Activated CD4-positive, alpha-beta T cell treated with anti-CD3 and anti-CD28 coated beads for 36 hours (primary cell): ENCODE measurements at regions of chr17 and their contacts with region 1.

Region 1: GRCh38 chr17:67376737-67377487 is at the start of gene PITPNC1:
- DNase-seq: peak; percentile 94
- ATAC-seq: peak; percentile 74
- H3K4me3 Mint-ChIP-seq: peak within 1 kb of the TSS; percentile 83
- H3K27ac Mint-ChIP-seq: peak within 1 kb of the TSS; percentile 82
- H3K4me1 Mint-ChIP-seq: peaks cover 38% of the 10 kb centered on the region
- H3K27me3 Mint-ChIP-seq: no peaks in the 10 kb centered on the region
- total RNA-seq, gene PITPNC1: 41.6 to 56.3 TPM

Region 2: GRCh38 chr17:67116045-67116719 is 260.7 kb before region 1 on chr17:
- CTCF ChIA-PET with region 1: no interaction called
- POLR2A ChIA-PET with region 1: no interaction called
- intact Hi-C with region 1: no loop called
- DNase-seq: no peak
- ATAC-seq: no peak
- H3K4me3 Mint-ChIP-seq: no peak overlapping the region
- H3K27ac Mint-ChIP-seq: no peak overlapping the region
- H3K4me1 Mint-ChIP-seq: peaks cover 9% of the 10 kb centered on the region
- H3K27me3 Mint-ChIP-seq: no peaks in the 10 kb centered on the region

Region 3: GRCh38 chr17:67359960-67360773 is 16.7 kb before region 1 on chr17:
- CTCF ChIA-PET with region 1: interaction called, 35 read pairs
- POLR2A ChIA-PET with region 1: interaction called, 7 read pairs
- intact Hi-C with region 1: loop called in 1 of 2 experiments (anchors 1 kb)
- DNase-seq: peak; percentile 76
- ATAC-seq: peak; percentile 85
- H3K4me3 Mint-ChIP-seq: peak overlapping the region; percentile 47
- H3K27ac Mint-ChIP-seq: peak overlapping the region; percentile 87
- H3K4me1 Mint-ChIP-seq: peaks cover 73% of the 10 kb centered on the region
- H3K27me3 Mint-ChIP-seq: no peaks in the 10 kb centered on the region

Region 4: GRCh38 chr17:67421869-67422273 is 45.0 kb after region 1 on chr17:
- CTCF ChIA-PET with region 1: interaction called, 16 read pairs
- POLR2A ChIA-PET with region 1: no interaction called
- intact Hi-C with region 1: no loop called
- DNase-seq: peak; percentile 70
- ATAC-seq: peak; percentile 96
- H3K4me3 Mint-ChIP-seq: peak overlapping the region; percentile 20
- H3K27ac Mint-ChIP-seq: peak overlapping the region; percentile 88
- H3K4me1 Mint-ChIP-seq: peaks cover 75% of the 10 kb centered on the region
- H3K27me3 Mint-ChIP-seq: no peaks in the 10 kb centered on the region

Region 5: DNA sequence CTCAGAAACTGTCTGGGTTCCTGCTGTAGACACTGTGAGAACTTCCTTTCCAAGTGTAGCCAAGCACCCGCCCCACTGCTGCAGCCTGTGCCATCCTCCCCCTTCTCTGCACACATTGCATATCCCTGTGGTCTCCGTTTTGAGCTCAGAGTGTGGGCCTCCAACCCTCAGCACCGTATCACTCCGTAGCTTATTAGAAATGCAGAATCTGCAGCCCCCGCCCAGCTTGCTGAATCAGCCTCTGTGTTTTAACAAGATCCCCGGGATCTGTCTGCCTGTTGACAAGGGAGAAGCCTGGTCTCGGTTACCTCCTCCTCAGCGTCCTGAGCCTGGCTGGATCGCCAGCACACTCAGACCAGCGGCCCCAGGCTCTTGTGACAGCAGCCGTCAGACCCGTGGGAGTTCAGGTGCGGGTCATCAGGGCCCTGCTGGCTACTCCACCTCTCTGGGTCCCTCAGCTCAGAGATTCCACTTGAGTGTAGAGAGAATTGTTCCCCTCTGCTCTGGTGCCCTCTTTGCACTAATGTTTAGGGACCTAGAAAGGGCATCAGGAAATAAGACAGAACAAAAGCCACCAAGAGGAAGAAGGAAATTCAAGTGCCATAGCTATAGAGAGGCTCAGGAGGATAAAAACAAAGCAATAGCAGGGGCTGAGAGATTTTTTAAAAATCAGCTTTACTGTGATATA is 92.4 kb after region 1 on chr17:
- CTCF ChIA-PET with region 1: interaction called, 171 read pairs
- POLR2A ChIA-PET with region 1: interaction called, 5 read pairs
- intact Hi-C with region 1: no loop called
- DNase-seq: no peak
- ATAC-seq: peak; percentile 42
- H3K4me3 Mint-ChIP-seq: no peak overlapping the region
- H3K27ac Mint-ChIP-seq: peak overlapping the region; percentile 56
- H3K4me1 Mint-ChIP-seq: peaks cover 65% of the 10 kb centered on the region
- H3K27me3 Mint-ChIP-seq: no peaks in the 10 kb centered on the region

Region 6: GRCh38 chr17:67602956-67603355 is 226.0 kb after region 1 on chr17:
- CTCF ChIA-PET with region 1: interaction called, 85 read pairs
- POLR2A ChIA-PET with region 1: no interaction called
- intact Hi-C with region 1: loop called (anchors 1 to 2 kb)
- DNase-seq: peak; percentile 69
- ATAC-seq: peak; percentile 93
- H3K4me3 Mint-ChIP-seq: no peak overlapping the region
- H3K27ac Mint-ChIP-seq: no peak overlapping the region
- H3K4me1 Mint-ChIP-seq: peaks cover 20% of the 10 kb centered on the region
- H3K27me3 Mint-ChIP-seq: no peaks in the 10 kb centered on the region

Region 7: GRCh38 chr17:67717624-67718329 is 340.9 kb after region 1 on chr17 and contains the start of gene NOL11:
- CTCF ChIA-PET with region 1: interaction called, 6 read pairs
- POLR2A ChIA-PET with region 1: interaction called, 5 read pairs
- intact Hi-C with region 1: loop called in 1 of 2 experiments (anchors 1 kb)
- DNase-seq: peak; percentile 100
- ATAC-seq: peak; percentile 96
- H3K4me3 Mint-ChIP-seq: peak within 1 kb of the TSS; percentile 88
- H3K27ac Mint-ChIP-seq: peak within 1 kb of the TSS; percentile 98
- H3K4me1 Mint-ChIP-seq: peaks cover 19% of the 10 kb centered on the region
- H3K27me3 Mint-ChIP-seq: no peaks in the 10 kb centered on the region
- total RNA-seq, gene NOL11: 79.3 to 79.7 TPM

Region 8: DNA sequence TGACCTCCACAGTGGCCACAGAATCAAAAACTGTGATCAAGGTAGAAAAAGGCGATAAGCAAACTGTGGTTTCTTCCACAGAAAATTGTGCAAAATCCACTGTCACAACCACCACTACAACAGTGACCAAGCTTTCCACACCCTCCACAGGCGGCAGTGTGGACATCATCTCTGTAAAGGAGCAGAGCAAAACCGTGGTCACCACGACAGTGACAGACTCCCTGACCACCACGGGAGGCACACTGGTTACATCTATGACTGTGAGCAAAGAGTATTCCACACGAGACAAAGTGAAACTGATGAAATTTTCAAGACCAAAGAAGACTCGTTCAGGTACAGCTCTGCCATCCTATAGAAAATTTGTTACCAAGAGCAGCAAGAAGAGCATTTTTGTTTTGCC is 535.7 kb after region 1 on chr17:
- CTCF ChIA-PET with region 1: no interaction called
- POLR2A ChIA-PET with region 1: no interaction called
- intact Hi-C with region 1: loop called in 1 of 2 experiments (anchors 5 kb)
- DNase-seq: peak; percentile 33
- ATAC-seq: peak; percentile 21
- H3K4me3 Mint-ChIP-seq: no peak overlapping the region
- H3K27ac Mint-ChIP-seq: no peak overlapping the region
- H3K4me1 Mint-ChIP-seq: peaks cover 28% of the 10 kb centered on the region
- H3K27me3 Mint-ChIP-seq: no peaks in the 10 kb centered on the region

Region 9: GRCh38 chr17:67959288-67959900 is 582.5 kb after region 1 on chr17:
- CTCF ChIA-PET with region 1: no interaction called
- POLR2A ChIA-PET with region 1: no interaction called
- intact Hi-C with region 1: no loop called
- DNase-seq: no peak
- ATAC-seq: no peak
- H3K4me3 Mint-ChIP-seq: no peak overlapping the region
- H3K27ac Mint-ChIP-seq: peak overlapping the region; percentile 66
- H3K4me1 Mint-ChIP-seq: peaks cover 16% of the 10 kb centered on the region
- H3K27me3 Mint-ChIP-seq: no peaks in the 10 kb centered on the region